Activated CD8-positive, alpha-beta T cell treated with anti-CD3 and anti-CD28 coated beads, Interleukin-2, amount 10 ng/mL, durations not matched to agents 7 days and 5 days (primary cell): ENCODE measurements at regions of chr19 and their contacts with region 1.

Region 1: GRCh38 chr19:38891771-38892170 is 7.6 kb downstream of the SIRT2 start:
- DNase-seq: no peak
- ATAC-seq: no peak
- H3K4me3 Mint-ChIP-seq: no peak overlapping the region
- H3K27ac Mint-ChIP-seq: no peak overlapping the region
- H3K4me1 Mint-ChIP-seq: peaks cover 4% of the 10 kb centered on the region
- H3K27me3 Mint-ChIP-seq: no peaks in the 10 kb centered on the region

Region 2: GRCh38 chr19:38769635-38770211 is 122.0 kb before region 1 on chr19:
- CTCF ChIA-PET with region 1: interaction called, 19 read pairs
- POLR2A ChIA-PET with region 1: no interaction called
- DNase-seq: peak; percentile 89
- ATAC-seq: peak; percentile 83
- H3K4me3 Mint-ChIP-seq: peak overlapping the region; percentile 56
- H3K27ac Mint-ChIP-seq: peak overlapping the region; percentile 77
- H3K4me1 Mint-ChIP-seq: peaks cover 9% of the 10 kb centered on the region
- H3K27me3 Mint-ChIP-seq: peaks cover 7% of the 10 kb centered on the region

Region 3: GRCh38 chr19:38831142-38831605 is 60.6 kb before region 1 on chr19:
- CTCF ChIA-PET with region 1: interaction called, 12 read pairs
- POLR2A ChIA-PET with region 1: interaction called, 4 read pairs
- DNase-seq: peak; percentile 51
- ATAC-seq: peak; percentile 35
- H3K4me3 Mint-ChIP-seq: peak overlapping the region; percentile 92
- H3K27ac Mint-ChIP-seq: peak overlapping the region; percentile 88
- H3K4me1 Mint-ChIP-seq: peaks cover 33% of the 10 kb centered on the region
- H3K27me3 Mint-ChIP-seq: no peaks in the 10 kb centered on the region

Region 4: DNA sequence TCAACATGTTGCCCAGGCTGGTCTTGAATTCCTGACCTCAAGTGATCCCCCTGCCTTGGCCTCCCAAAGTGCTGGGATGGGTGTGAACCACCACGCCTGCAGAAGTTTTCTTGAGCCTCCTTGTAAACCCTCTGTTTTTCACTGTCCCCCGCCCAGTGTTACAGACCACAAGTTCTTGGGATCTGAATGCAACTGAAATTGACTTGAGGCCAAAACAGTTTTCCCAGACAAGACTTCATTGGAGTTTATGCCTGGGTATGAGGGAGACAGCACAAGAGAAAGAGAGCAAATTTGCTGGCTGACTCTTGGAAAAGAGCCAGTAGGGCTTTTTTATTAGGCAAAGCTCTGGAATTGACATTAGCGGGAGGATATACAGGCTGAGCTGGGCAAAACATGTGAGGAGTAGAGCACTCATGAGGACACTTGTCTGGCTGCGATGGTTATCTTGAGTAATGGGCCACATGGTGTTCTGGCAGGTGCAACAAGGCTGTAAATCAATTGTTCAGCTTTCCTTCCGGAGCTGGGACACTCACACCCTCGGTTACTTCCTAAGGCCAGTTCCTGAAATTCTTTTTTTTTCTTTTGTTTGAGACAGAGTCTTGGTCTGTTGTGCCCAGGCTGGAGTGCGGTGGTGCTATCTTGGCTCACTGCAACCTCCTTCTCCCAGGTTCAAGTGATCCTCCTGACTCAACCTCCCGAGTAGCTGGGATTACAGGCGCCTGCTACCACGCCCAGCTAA is 29.3 kb before region 1 on chr19:
- CTCF ChIA-PET with region 1: interaction called, 12 read pairs
- POLR2A ChIA-PET with region 1: no interaction called
- DNase-seq: no peak
- ATAC-seq: no peak
- H3K4me3 Mint-ChIP-seq: no peak overlapping the region
- H3K27ac Mint-ChIP-seq: no peak overlapping the region
- H3K4me1 Mint-ChIP-seq: peaks cover 52% of the 10 kb centered on the region
- H3K27me3 Mint-ChIP-seq: no peaks in the 10 kb centered on the region

Region 5: GRCh38 chr19:38869856-38870607 is 21.7 kb before region 1 on chr19:
- CTCF ChIA-PET with region 1: interaction called, 11 read pairs
- POLR2A ChIA-PET with region 1: no interaction called
- DNase-seq: peak; percentile 94
- ATAC-seq: peak; percentile 94
- H3K4me3 Mint-ChIP-seq: peak overlapping the region; percentile 79
- H3K27ac Mint-ChIP-seq: peak overlapping the region; percentile 86
- H3K4me1 Mint-ChIP-seq: peaks cover 54% of the 10 kb centered on the region
- H3K27me3 Mint-ChIP-seq: no peaks in the 10 kb centered on the region

Region 6: GRCh38 chr19:38877781-38878574 is 13.8 kb before region 1 on chr19 and contains the start of gene RINL:
- CTCF ChIA-PET with region 1: interaction called, 56 read pairs
- POLR2A ChIA-PET with region 1: interaction called, 8 read pairs
- DNase-seq: peak; percentile 84
- ATAC-seq: peak; percentile 92
- H3K4me3 Mint-ChIP-seq: peak within 1 kb of the TSS; percentile 95
- H3K27ac Mint-ChIP-seq: peak within 1 kb of the TSS; percentile 98
- H3K4me1 Mint-ChIP-seq: peaks cover 37% of the 10 kb centered on the region
- H3K27me3 Mint-ChIP-seq: no peaks in the 10 kb centered on the region
- total RNA-seq, gene RINL: 58.9 to 63.5 TPM